ENCODE measurements at regions of chr2 and their contacts with region 1.

Region 1: GRCh38 chr2:175111200-175111657 is 56.8 kb downstream of the ATF2 start:
- DNase-seq: peak; percentile 60
- ATAC-seq: peak; percentile 41
- H3K4me3 ChIP-seq: no peak overlapping the region
- H3K4me3 Mint-ChIP-seq: no peak overlapping the region
- H3K27ac ChIP-seq: peak overlapping the region in 1 of 2 donors; percentile 40
- H3K27ac Mint-ChIP-seq: no peak overlapping the region
- H3K4me1 ChIP-seq: no peaks in the 10 kb centered on the region
- H3K4me1 Mint-ChIP-seq: no peaks in the 10 kb centered on the region
- H3K27me3 ChIP-seq: no peaks in the 10 kb centered on the region
- H3K27me3 Mint-ChIP-seq: no peaks in the 10 kb centered on the region
- CTCF ChIP-seq: peak; percentile 87

Region 2: GRCh38 chr2:174997110-174997509 is 114.1 kb before region 1 on chr2:
- CTCF ChIA-PET with region 1: no interaction called
- POLR2A ChIA-PET with region 1: no interaction called
- intact Hi-C with region 1: no loop called
- DNase-seq: no peak
- ATAC-seq: no peak
- H3K4me3 ChIP-seq: no peak overlapping the region
- H3K4me3 Mint-ChIP-seq: no peak overlapping the region
- H3K27ac ChIP-seq: no peak overlapping the region
- H3K27ac Mint-ChIP-seq: no peak overlapping the region
- H3K4me1 ChIP-seq: no peaks in the 10 kb centered on the region
- H3K4me1 Mint-ChIP-seq: no peaks in the 10 kb centered on the region
- H3K27me3 ChIP-seq: peaks cover 0 to 12% (median 8%) of the 10 kb centered on the region in 4 experiments
- H3K27me3 Mint-ChIP-seq: peaks cover 31% of the 10 kb centered on the region
- CTCF ChIP-seq: no peak

Region 3: GRCh38 chr2:175181104-175181876 is 70.1 kb after region 1 on chr2 and contains the start of gene ATP5MC3:
- CTCF ChIA-PET with region 1: no interaction called
- POLR2A ChIA-PET with region 1: no interaction called
- intact Hi-C with region 1: loop called (anchors 5 kb)
- DNase-seq: peak; percentile 95
- ATAC-seq: peak; percentile 95
- H3K4me3 ChIP-seq: peak within 1 kb of the TSS; percentile 81 to 94 (median 88)
- H3K4me3 Mint-ChIP-seq: peak within 1 kb of the TSS; percentile 91
- H3K27ac ChIP-seq: peak within 1 kb of the TSS; percentile 59 to 79
- H3K27ac Mint-ChIP-seq: peak within 1 kb of the TSS; percentile 78
- H3K4me1 ChIP-seq: peaks cover 12 to 13% of the 10 kb centered on the region in 2 donors
- H3K4me1 Mint-ChIP-seq: peaks cover 14% of the 10 kb centered on the region
- H3K27me3 ChIP-seq: no peaks in the 10 kb centered on the region
- H3K27me3 Mint-ChIP-seq: peaks cover 3% of the 10 kb centered on the region
- CTCF ChIP-seq: peak; percentile 22
- total RNA-seq, gene ATP5MC3: 68.5 and 68.9 TPM in 2 replicates

Measured in B cell (primary cell).